HEK293 (cell line): ENCODE measurements at regions of chr1 and their contacts with region 1.

Region 1: GRCh38 chr1:24744911-24745710 is at the start of gene CLIC4:
- H3K4me3 ChIP-seq: peak within 1 kb of the TSS; percentile 83
- H3K27ac ChIP-seq: peak within 1 kb of the TSS; percentile 91
- H3K4me1 ChIP-seq: peaks cover 5% of the 10 kb centered on the region; the same call in 1 of the 2 replicates
- CTCF ChIP-seq: peak; percentile 77

Region 2: DNA sequence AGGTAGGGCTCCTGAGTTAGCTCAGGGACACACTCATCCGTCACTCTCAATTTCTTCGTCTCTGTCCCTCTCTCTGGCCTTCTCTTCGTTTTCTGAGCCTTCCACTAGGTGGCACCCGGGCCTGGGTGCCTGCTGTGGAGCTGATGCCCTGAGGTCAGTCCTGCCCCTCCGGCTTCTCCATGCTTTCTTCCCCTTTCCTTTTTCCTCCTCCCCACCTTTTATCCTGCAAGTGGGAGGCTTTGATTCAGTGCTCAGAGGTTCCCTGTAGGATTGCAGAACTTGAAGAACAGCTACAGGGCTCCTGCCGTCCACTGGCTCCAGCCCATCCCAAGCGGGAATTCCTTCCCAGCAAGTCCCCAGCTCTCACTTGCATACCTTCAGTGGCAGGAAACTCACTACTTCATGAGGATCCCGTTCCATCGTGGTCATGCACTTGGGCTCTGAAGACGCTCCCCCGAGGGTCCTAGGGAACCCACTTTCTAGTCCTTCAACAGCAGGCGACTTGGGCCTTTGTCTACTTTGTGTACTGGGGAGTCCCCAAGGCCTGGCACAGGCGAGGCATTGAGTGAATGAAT is 56.4 kb before region 1 on chr1:
- CTCF ChIA-PET with region 1: interaction called, 26 read pairs
- POLR2A ChIA-PET with region 1: interaction called, 28 read pairs
- H3K4me3 ChIP-seq: no peak overlapping the region
- H3K27ac ChIP-seq: no peak overlapping the region
- H3K4me1 ChIP-seq: no peaks in the 10 kb centered on the region; the same call in 1 of the 2 replicates
- CTCF ChIP-seq: peak; percentile 88

Region 3: DNA sequence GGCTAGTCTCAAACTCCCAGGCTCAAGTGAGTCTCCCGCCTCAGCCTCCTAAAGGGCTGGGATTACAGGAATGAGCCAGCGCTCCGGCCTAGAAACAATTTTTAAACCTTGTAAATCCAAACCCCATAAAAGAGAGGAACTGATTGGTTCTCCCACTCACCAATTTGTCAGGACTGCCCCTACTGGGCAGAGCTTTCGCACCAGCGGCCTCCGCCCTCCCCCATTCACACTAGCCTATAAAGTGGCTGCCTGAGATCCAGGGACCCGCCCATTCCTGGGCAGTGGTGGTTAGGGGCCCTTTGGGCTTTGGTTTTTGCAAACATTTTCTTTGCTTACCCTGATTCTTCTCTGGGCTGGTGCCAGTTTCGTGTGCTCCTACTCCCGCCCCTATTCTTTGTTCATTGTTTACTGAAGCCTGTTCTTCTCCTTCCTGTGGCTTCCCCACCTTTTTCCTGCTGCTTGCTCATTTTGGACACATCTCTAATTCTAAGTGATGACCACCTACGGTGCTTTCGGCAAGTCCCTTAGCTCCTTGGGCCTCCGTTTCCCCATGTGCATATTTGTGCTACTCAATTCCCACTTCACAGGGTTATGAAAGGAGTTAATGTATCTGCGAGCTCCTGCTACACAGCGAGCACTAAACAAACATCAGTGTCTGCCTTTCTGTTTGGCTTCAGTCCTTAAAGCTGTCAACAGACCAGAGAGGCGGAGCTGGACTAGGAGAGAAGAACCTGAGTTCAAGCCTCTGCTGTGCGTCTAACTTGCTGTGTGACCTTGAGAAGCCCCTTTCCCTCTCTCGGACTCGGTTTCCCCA is 39.6 kb before region 1 on chr1:
- CTCF ChIA-PET with region 1: interaction called, 7 read pairs
- POLR2A ChIA-PET with region 1: interaction called, 35 read pairs
- H3K4me3 ChIP-seq: peak overlapping the region; percentile 17; the same call in 1 of the 2 replicates
- H3K27ac ChIP-seq: peak overlapping the region; percentile 72
- H3K4me1 ChIP-seq: peaks cover 6% of the 10 kb centered on the region; the same call in 1 of the 2 replicates
- CTCF ChIP-seq: no peak

Region 4: DNA sequence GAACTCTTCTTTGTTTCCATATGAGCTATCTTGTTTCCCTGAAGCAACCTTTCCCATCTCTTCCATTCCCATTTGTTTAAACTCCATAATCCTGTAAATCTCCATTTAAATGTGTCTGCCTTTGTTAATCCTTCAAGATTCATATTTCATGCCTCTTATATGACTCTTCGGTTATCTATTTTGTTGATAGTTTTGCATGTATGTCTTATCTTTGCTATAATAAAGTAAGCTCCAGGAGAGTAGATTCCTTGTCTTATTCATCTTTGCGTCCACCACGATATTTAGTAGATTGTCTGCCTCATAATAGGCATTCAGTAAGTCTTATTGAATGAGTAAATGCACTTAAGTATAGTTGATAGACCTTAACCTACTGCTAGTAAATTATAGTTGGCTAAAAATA is 18.6 kb after region 1 on chr1:
- CTCF ChIA-PET with region 1: no interaction called
- POLR2A ChIA-PET with region 1: interaction called, 21 read pairs
- H3K4me3 ChIP-seq: no peak overlapping the region
- H3K27ac ChIP-seq: no peak overlapping the region
- H3K4me1 ChIP-seq: peaks cover 8% of the 10 kb centered on the region
- CTCF ChIP-seq: no peak

Region 5: DNA sequence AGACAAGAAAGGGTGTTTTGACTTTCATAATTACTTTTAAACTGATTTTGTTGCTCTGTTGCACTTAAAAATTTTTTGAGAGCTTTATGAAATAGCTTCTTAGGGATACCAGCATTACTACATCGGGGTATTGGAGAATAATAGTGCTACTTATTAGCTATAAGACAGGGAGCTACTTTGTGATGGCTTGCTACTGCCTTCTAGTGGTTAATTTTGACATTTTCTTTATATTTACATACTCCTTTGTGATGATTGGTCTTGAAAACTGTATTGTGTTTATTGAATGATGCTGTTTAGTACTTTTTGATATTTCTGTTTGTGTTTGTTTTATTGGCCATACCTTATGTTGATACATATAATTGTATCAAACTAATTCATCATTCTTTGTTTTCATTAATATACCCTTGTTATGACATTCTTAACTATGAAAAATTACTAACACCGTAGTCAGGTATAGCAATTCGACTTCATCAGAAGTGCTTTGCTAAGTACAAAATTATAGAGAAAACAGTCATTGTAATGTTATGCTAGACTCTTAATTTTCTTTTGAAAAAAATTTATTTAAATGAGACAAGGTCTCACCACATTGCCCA is 85.7 kb after region 1 on chr1:
- CTCF ChIA-PET with region 1: interaction called, 16 read pairs
- POLR2A ChIA-PET with region 1: interaction called, 15 read pairs
- H3K4me3 ChIP-seq: no peak overlapping the region
- H3K27ac ChIP-seq: no peak overlapping the region
- H3K4me1 ChIP-seq: peaks cover 21% of the 10 kb centered on the region
- CTCF ChIP-seq: no peak; the same call in 1 of the 2 replicates

Region 6: DNA sequence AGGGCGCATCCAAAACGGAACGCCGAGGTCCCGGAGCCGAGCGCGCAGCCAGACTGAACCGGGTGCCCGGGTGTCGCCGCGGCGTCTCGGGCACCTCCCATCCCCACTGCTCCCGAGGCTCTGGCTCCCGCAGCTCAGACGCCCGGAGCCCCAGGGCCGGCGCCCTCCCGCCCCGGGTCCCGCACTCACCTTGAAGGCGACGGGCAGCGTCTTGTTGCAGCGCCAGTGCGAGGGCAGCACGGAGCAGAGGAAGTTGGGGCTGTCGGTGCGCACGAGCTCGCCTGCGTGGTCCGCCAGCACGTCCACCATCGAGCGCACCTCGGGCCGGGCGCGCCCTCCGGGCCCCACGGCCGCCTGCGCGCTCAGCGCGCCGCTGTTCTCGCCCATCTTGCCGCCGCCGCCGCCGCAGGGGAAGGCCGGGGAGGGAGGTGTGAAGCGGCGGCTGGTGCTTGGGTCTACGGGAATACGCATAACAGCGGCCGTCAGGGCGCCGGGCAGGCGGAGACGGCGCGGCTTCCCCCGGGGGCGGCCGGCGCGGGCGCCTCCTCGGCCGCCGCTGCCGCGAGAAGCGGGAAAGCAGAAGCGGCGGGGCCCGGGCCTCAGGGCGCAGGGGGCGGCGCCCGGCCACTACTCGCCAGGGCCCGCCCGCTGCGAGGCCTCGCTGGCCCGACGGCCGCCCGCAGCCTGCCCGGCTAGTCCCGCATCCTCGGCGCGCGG is 184.4 kb after region 1 on chr1:
- CTCF ChIA-PET with region 1: no interaction called
- POLR2A ChIA-PET with region 1: no interaction called
- H3K4me3 ChIP-seq: peak overlapping the region; percentile 33
- H3K27ac ChIP-seq: peak overlapping the region; percentile 64; the same call in 1 of the 2 replicates
- H3K4me1 ChIP-seq: peaks cover 3% of the 10 kb centered on the region; the same call in 1 of the 2 replicates
- CTCF ChIP-seq: no peak